ENCODE measurements at regions of chr3 and their contacts with region 1.

Region 1: DNA sequence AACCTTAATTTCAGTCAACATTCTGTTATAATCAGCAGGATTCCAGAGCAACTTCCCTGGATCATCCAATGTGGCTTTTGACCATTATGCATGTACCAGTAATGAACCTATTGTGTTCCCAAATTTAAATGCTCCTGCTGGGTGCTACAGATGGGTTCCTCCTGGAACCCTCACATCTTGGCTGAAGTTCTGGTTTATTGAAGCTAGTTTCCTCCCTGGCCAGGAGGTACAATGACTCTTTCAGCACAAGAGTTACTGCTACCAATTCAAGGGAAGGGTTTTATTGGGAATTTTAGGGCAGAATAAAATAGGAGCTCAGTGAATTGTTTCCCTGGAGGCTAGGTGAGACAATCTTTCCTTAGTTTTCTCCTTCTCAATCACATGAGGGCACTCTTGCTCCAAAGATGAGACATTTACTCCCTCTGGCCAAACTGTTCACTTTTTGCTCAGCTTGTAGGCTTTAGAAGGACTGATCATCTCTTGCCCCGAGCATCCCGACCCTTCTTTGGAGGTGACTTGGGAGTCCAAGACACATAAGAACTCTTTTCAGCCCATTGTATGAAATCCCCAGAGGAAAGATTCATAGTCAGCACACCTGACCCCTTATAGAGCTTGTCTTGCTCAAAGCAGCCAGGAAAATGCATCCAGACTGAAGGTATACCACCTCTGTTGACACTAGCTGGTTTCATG is 8.8 kb upstream of the NPHP3 start:
- DNase-seq: peak in 2 of 14 experiments; percentile 10 to 18
- ATAC-seq: no peak
- H3K4me3 ChIP-seq: no peak overlapping the region
- H3K4me3 Mint-ChIP-seq: no peak overlapping the region
- H3K27ac ChIP-seq: no peak overlapping the region
- H3K27ac Mint-ChIP-seq: no peak overlapping the region
- H3K4me1 ChIP-seq: no peaks in the 10 kb centered on the region
- H3K4me1 Mint-ChIP-seq: no peaks in the 10 kb centered on the region
- H3K27me3 ChIP-seq: peaks cover 10 to 22% of the 10 kb centered on the region in 2 experiments
- H3K27me3 Mint-ChIP-seq: peaks cover 65% of the 10 kb centered on the region
- CTCF ChIP-seq: peak; percentile 13

Region 2: DNA sequence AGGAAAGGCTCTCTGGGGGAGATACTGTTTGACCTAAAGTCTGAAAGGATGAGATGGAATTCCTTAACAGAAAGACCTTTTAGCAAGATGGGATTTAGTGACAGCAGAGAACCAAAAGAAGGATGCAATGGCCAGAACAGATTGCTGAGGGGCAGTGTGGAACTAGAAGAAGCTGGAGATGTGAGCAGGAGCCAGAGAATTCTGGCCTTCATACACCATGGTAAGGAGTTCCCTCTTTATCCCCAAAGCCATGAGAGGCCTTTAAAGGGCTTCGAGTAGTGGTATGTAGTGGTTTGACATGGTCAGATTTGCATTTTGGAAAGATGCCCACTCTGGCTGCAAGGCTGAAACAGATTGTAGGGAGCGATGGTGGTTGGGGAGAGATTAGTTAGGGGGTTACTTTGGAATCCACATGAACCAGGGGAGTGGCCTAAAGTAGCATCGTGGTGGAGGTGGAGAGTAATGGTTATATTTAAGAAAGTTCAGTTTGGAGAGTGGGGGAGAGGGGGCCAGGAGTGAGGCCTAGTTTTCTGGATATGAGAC is 25.1 kb after region 1 on chr3:
- CTCF ChIA-PET with region 1: no interaction called
- POLR2A ChIA-PET with region 1: no interaction called
- intact Hi-C with region 1: no loop called
- DNase-seq: no peak
- ATAC-seq: no peak
- H3K4me3 ChIP-seq: no peak overlapping the region
- H3K4me3 Mint-ChIP-seq: no peak overlapping the region
- H3K27ac ChIP-seq: no peak overlapping the region
- H3K27ac Mint-ChIP-seq: no peak overlapping the region
- H3K4me1 ChIP-seq: no peaks in the 10 kb centered on the region
- H3K4me1 Mint-ChIP-seq: no peaks in the 10 kb centered on the region
- H3K27me3 ChIP-seq: peaks cover 0 to 3% of the 10 kb centered on the region in 2 experiments
- H3K27me3 Mint-ChIP-seq: no peaks in the 10 kb centered on the region
- CTCF ChIP-seq: no peak

Region 3: GRCh38 chr3:133159498-133160475 is 428.8 kb after region 1 on chr3:
- CTCF ChIA-PET with region 1: no interaction called
- POLR2A ChIA-PET with region 1: no interaction called
- intact Hi-C with region 1: no loop called
- DNase-seq: no peak
- ATAC-seq: no peak
- H3K4me3 ChIP-seq: no peak overlapping the region
- H3K4me3 Mint-ChIP-seq: no peak overlapping the region
- H3K27ac ChIP-seq: no peak overlapping the region
- H3K27ac Mint-ChIP-seq: no peak overlapping the region
- H3K4me1 ChIP-seq: no peaks in the 10 kb centered on the region
- H3K4me1 Mint-ChIP-seq: no peaks in the 10 kb centered on the region
- H3K27me3 ChIP-seq: no peaks in the 10 kb centered on the region
- H3K27me3 Mint-ChIP-seq: peaks cover 21% of the 10 kb centered on the region
- CTCF ChIP-seq: no peak

Region 4: DNA sequence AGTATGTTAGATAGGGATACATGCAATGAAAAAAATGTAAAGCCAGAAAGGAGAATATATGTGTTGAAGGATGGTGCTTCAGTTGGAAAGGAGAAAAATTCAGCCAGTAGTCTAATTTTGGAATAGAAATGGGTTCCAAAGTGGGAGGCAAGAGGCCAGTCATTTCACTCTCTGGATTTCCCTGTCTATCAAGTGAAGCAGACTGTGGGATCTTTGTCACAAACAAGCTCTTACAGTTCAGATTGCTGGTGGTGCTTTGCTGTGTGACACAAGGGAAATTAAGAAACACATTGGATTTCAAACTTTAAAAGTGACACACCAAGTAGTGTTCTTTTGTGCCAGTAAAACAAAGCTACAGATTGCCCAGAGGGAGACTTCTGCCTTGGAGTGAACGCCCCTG is 586.8 kb after region 1 on chr3:
- CTCF ChIA-PET with region 1: no interaction called
- POLR2A ChIA-PET with region 1: no interaction called
- intact Hi-C with region 1: no loop called
- DNase-seq: no peak
- ATAC-seq: no peak
- H3K4me3 ChIP-seq: no peak overlapping the region
- H3K4me3 Mint-ChIP-seq: no peak overlapping the region
- H3K27ac ChIP-seq: no peak overlapping the region
- H3K27ac Mint-ChIP-seq: no peak overlapping the region
- H3K4me1 ChIP-seq: no peaks in the 10 kb centered on the region
- H3K4me1 Mint-ChIP-seq: no peaks in the 10 kb centered on the region
- H3K27me3 ChIP-seq: peaks cover 6 to 13% of the 10 kb centered on the region in 2 experiments
- H3K27me3 Mint-ChIP-seq: peaks cover 48% of the 10 kb centered on the region
- CTCF ChIP-seq: no peak

Region 5: GRCh38 chr3:133426721-133427120 is 695.7 kb after region 1 on chr3:
- CTCF ChIA-PET with region 1: interaction called, 7 read pairs
- POLR2A ChIA-PET with region 1: interaction called, 3 read pairs
- intact Hi-C with region 1: loop called (anchors 1 kb)
- DNase-seq: no peak
- ATAC-seq: no peak
- H3K4me3 ChIP-seq: no peak overlapping the region
- H3K4me3 Mint-ChIP-seq: no peak overlapping the region
- H3K27ac ChIP-seq: no peak overlapping the region
- H3K27ac Mint-ChIP-seq: no peak overlapping the region
- H3K4me1 ChIP-seq: peaks cover 6% of the 10 kb centered on the region
- H3K4me1 Mint-ChIP-seq: no peaks in the 10 kb centered on the region
- H3K27me3 ChIP-seq: no peaks in the 10 kb centered on the region
- H3K27me3 Mint-ChIP-seq: peaks cover 9% of the 10 kb centered on the region
- CTCF ChIP-seq: no peak

Region 6: DNA sequence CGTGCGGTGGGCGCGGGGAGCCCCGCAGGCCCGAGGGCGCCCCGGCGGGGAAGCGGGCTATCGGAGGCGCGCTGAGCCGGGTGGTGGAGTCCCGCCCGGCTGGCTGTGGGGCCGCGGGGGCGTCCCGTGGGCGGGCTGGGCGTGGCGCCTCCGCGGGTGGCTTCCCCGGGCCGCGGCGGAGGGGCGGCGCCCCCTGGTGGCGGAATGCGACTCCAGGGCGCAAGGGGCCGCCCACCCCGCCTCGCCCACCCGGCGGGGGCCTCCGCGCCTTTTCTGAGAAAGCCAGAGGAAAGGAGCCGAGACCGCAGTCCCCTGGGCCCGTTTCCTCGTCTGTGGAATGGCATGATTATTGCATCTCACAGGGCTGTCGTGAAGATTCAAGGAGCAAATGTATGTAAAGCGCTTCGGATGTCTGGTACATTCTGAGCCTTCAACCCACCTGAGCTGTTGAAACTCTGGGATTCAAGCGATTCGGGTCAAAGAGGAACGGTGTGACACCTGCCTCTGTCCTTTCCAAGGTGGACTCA is 1196.6 kb after region 1 on chr3:
- CTCF ChIA-PET with region 1: interaction called, 5 read pairs
- POLR2A ChIA-PET with region 1: no interaction called
- intact Hi-C with region 1: loop called (anchors 1 to 2 kb)
- DNase-seq: peak; percentile 47 to 90 (median 68)
- ATAC-seq: peak; percentile 97
- H3K4me3 ChIP-seq: peak overlapping the region; percentile 51
- H3K4me3 Mint-ChIP-seq: peak overlapping the region; percentile 80
- H3K27ac ChIP-seq: no peak overlapping the region
- H3K27ac Mint-ChIP-seq: no peak overlapping the region
- H3K4me1 ChIP-seq: peaks cover 14% of the 10 kb centered on the region
- H3K4me1 Mint-ChIP-seq: peaks cover 7% of the 10 kb centered on the region
- H3K27me3 ChIP-seq: peaks cover 0 to 9% of the 10 kb centered on the region in 2 experiments
- H3K27me3 Mint-ChIP-seq: peaks cover 18% of the 10 kb centered on the region
- CTCF ChIP-seq: peak; percentile 54

Measured in CD4-positive, alpha-beta T cell (primary cell).